Activated CD4-positive, alpha-beta memory T cell treated with anti-CD3 and anti-CD28 coated beads for 36 hours (primary cell): ENCODE measurements at regions of chr3 and their contacts with region 1.

Region 1: DNA sequence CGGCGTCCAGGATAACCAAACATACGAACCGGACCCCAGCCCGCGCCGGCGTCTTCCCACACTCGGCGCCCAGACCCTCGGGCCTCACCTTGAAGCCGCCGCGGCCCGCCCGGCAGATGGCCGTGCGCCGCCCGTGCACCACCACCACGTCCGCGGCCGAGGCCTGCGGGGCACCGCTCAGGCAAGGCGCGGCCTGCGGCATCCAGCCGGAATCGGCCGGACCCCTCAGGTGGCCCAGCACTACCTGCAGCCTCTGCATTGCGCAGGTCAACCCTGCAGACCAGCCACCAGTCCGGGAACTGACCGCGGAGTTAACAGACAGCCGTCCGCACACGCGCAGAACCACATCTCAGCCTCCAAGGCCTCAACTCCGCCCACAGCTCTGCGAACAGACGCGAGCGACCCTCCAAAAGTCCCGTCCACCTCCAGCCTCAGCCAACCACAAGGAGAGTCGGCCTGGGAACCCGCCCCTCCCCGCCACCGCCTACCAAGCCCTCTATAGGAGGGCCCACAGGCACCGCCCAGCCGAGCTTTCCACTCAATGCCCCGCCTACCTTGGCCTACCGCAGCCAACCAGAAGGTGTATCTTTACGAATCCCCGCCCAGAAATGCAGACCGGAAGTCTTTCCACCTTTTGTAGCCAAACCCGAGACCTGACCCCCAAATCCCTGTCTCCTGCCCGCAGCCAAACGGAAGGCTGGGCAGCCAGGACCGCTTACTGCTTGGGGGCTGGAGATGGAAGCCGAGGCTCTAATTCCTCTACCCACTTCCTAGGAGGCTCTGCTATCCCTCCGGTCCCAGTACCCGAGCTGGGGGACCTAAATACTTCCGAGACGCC is at the start of gene ACAA1:
- DNase-seq: peak; percentile 99
- H3K4me3 Mint-ChIP-seq: peak within 1 kb of the TSS; percentile 80
- H3K27ac Mint-ChIP-seq: peak within 1 kb of the TSS; percentile 93
- H3K4me1 Mint-ChIP-seq: peaks cover 55% of the 10 kb centered on the region
- H3K27me3 Mint-ChIP-seq: no peaks in the 10 kb centered on the region
- total RNA-seq, gene ACAA1: 55.5 to 57.7 TPM

Region 2: GRCh38 chr3:38039101-38039898 is 97.7 kb before region 1 on chr3 and contains the start of gene DLEC1:
- CTCF ChIA-PET with region 1: no interaction called
- POLR2A ChIA-PET with region 1: interaction called, 12 read pairs
- intact Hi-C with region 1: loop called (anchors 1 kb)
- DNase-seq: peak; percentile 92
- H3K4me3 Mint-ChIP-seq: peak within 1 kb of the TSS; percentile 48
- H3K27ac Mint-ChIP-seq: peak within 1 kb of the TSS; percentile 93
- H3K4me1 Mint-ChIP-seq: peaks cover 33% of the 10 kb centered on the region
- H3K27me3 Mint-ChIP-seq: no peaks in the 10 kb centered on the region
- total RNA-seq, gene DLEC1: 0.70 to 1.1 TPM

Region 3: GRCh38 chr3:38054291-38055001 is 82.5 kb before region 1 on chr3:
- CTCF ChIA-PET with region 1: no interaction called
- POLR2A ChIA-PET with region 1: no interaction called
- intact Hi-C with region 1: no loop called
- DNase-seq: peak; percentile 24
- H3K4me3 Mint-ChIP-seq: no peak overlapping the region
- H3K27ac Mint-ChIP-seq: no peak overlapping the region
- H3K4me1 Mint-ChIP-seq: no peaks in the 10 kb centered on the region
- H3K27me3 Mint-ChIP-seq: no peaks in the 10 kb centered on the region

Region 4: DNA sequence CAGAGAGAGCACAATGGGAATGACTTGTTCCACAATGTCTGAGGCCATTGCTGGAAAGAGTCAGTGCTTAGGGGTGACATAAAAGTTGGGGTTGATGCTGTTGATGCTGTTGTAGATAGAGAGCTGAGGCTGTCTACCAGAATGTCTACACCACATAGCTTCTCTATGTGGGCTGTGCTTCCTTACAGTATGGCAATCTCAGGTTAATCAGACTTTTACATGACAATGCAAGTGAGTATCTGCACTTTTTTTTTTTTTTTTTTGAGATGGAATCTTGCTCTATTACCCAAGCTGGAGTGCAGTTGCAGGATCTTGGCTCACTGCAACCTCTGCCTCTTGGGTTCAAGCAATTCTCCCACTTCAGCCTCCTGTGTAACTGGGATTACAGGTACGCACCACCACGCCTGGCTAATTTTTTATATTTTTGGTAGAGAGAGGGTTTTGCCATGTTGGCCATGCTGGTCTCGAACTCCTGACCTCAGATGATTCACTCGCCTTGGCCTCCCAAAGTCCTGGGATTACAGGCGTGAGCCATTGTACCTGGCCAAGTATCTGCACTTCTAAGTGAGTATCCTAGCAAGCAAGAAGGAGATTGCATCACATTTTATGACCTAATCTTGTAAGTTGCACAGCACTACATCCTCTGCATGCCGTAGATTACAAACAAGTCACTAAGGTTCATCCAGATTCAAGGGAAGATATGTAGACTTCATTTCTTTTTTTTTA is 69.3 kb before region 1 on chr3:
- CTCF ChIA-PET with region 1: no interaction called
- POLR2A ChIA-PET with region 1: no interaction called
- intact Hi-C with region 1: no loop called
- DNase-seq: no peak
- H3K4me3 Mint-ChIP-seq: no peak overlapping the region
- H3K27ac Mint-ChIP-seq: no peak overlapping the region
- H3K4me1 Mint-ChIP-seq: no peaks in the 10 kb centered on the region
- H3K27me3 Mint-ChIP-seq: no peaks in the 10 kb centered on the region

Region 5: DNA sequence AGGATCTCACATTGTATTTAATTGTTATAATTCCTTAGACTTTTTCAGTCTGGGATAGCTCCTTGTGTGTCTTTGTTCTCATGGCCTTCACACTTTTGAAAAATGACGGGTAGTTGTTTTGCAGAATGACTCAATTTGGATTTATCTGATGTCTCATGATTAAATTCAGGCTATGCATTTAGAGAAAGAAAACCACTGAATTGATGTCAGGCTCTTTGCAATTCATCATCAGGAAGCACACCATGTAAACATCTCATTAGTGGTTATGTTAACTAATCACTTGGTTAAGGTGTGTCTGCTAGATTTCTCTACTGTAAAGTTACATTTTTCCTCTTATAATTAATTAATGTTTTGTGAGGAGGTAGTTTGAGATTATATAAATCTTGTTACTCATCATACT is 120.6 kb after region 1 on chr3:
- CTCF ChIA-PET with region 1: no interaction called
- POLR2A ChIA-PET with region 1: no interaction called
- intact Hi-C with region 1: loop called (anchors 1 kb)
- DNase-seq: no peak
- H3K4me3 Mint-ChIP-seq: no peak overlapping the region
- H3K27ac Mint-ChIP-seq: no peak overlapping the region
- H3K4me1 Mint-ChIP-seq: peaks cover 37% of the 10 kb centered on the region
- H3K27me3 Mint-ChIP-seq: no peaks in the 10 kb centered on the region

Region 6: GRCh38 chr3:38453075-38453912 is 316.3 kb after region 1 on chr3 and contains the start of gene ACVR2B:
- CTCF ChIA-PET with region 1: no interaction called
- POLR2A ChIA-PET with region 1: no interaction called
- intact Hi-C with region 1: loop called (anchors 1 kb)
- DNase-seq: peak; percentile 82
- H3K4me3 Mint-ChIP-seq: peak within 1 kb of the TSS; percentile 96
- H3K27ac Mint-ChIP-seq: peak within 1 kb of the TSS; percentile 70
- H3K4me1 Mint-ChIP-seq: peaks cover 2% of the 10 kb centered on the region
- H3K27me3 Mint-ChIP-seq: no peaks in the 10 kb centered on the region
- total RNA-seq, gene ACVR2B: 7.1 to 7.8 TPM